Left ventricle myocardium inferior (tissue), 1 donor: ENCODE measurements at regions of chr20 and their contacts with region 1.

Region 1: GRCh38 chr20:37276494-37277252 is 12.8 kb upstream of the MANBAL start:
- DNase-seq: peak; percentile 41
- H3K4me3 ChIP-seq: no peak overlapping the region
- H3K27ac ChIP-seq: peak overlapping the region; percentile 59
- H3K4me1 ChIP-seq: peaks cover 10% of the 10 kb centered on the region
- H3K27me3 ChIP-seq: peaks cover 9% of the 10 kb centered on the region
- CTCF ChIP-seq: peak; percentile 38

Region 2: GRCh38 chr20:37356387-37356786 is 79.7 kb after region 1 on chr20:
- intact Hi-C with region 1: no loop called
- DNase-seq: peak; percentile 65
- H3K4me3 ChIP-seq: no peak overlapping the region
- H3K27ac ChIP-seq: peak overlapping the region; percentile 30
- H3K4me1 ChIP-seq: peaks cover 26% of the 10 kb centered on the region
- H3K27me3 ChIP-seq: no peaks in the 10 kb centered on the region
- CTCF ChIP-seq: no peak

Region 3: DNA sequence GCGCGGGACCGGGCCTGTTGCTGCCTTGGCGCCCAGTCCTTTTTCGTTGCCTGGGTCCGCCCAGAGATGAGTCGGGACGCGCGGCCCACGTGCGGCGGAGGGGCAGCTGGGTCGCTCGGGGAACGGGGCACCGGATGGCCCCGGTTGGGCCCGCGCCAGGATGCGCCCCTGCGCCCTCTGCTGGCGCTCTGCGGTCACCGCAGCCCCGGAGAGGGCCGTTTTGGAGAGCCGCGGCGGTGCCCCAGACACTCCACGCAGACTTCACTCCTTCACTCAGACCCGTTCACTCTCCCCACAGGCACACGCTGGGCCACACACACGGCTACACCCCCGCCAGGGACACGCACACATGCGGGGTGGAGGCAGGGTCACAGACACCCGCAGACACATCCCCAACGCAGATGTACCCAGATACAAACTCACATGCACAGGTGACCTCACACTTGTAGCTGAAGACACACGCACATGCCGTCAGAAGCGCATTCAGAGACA is 108.1 kb after region 1 on chr20:
- intact Hi-C with region 1: loop called (anchors 5 kb)
- DNase-seq: peak; percentile 66
- H3K4me3 ChIP-seq: peak overlapping the region; percentile 69
- H3K27ac ChIP-seq: peak overlapping the region; percentile 30
- H3K4me1 ChIP-seq: peaks cover 15% of the 10 kb centered on the region
- H3K27me3 ChIP-seq: peaks cover 4% of the 10 kb centered on the region
- CTCF ChIP-seq: peak; percentile 92

Region 4: DNA sequence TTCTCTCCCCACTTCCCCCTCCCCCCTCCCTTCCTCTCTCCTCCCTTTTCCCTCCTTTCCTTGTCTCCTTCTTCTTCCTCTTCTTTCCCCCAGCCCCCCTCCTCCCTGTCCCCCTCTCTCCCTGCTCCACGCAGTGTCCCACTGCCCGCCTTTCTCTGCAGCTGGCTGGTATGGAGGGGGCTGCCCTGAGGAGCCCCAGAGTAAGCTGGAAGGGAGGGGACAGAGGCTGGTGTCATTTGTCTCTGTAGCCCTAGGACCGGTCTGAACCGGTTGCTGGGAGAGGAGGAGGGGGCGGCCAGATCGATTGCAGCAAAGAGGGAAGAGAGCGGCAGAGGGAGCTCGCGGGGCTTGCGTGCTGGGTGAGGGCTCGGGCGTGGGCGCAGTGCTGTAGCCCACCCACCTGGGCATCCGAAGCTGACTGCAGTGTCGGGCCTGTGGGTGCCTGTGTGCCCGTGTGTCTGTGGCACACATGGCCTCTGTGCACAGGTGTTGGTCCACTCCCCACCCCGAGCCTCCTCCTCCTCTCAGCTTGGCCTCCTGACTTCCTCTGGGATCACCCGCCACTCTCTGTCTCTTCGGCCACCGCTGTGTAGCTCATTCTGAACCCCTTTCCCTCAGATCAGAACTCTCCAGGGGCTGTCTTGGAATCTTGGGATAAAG is 119.9 kb after region 1 on chr20:
- intact Hi-C with region 1: no loop called
- DNase-seq: no peak
- H3K4me3 ChIP-seq: no peak overlapping the region
- H3K27ac ChIP-seq: no peak overlapping the region
- H3K4me1 ChIP-seq: peaks cover 10% of the 10 kb centered on the region
- H3K27me3 ChIP-seq: no peaks in the 10 kb centered on the region
- CTCF ChIP-seq: no peak